ENCODE measurements at regions of chr6 and their contacts with region 1.

Region 1: GRCh38 chr6:96837081-96837971 is at the start of gene GPR63:
- DNase-seq: peak; percentile 92
- CTCF ChIP-seq: no peak

Region 2: DNA sequence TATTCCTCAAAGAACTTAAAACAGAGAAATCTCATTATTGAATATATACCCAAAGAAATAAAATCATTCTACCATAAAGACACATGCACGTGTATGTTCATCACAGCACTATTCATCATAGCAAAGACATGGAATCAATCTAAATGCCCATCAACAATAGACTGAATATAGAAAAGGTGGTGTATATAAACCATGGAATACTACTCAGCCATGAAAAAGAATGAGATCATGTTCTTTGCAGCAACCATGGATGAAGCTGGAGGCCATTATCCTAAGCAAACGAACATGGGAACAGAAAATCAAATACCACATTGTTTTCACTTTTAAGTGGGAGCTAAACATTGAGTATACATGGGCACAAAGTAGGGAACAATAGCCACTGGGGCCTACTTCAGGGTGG is 12.3 kb after region 1 on chr6:
- CTCF ChIA-PET with region 1: interaction called, 12 read pairs
- POLR2A ChIA-PET with region 1: no interaction called
- DNase-seq: no peak
- CTCF ChIP-seq: no peak

Measured in GM10248 (cell line).